CD4-positive, alpha-beta memory T cell (primary cell): ENCODE measurements at regions of chrX and their contacts with region 1.

Region 1: DNA sequence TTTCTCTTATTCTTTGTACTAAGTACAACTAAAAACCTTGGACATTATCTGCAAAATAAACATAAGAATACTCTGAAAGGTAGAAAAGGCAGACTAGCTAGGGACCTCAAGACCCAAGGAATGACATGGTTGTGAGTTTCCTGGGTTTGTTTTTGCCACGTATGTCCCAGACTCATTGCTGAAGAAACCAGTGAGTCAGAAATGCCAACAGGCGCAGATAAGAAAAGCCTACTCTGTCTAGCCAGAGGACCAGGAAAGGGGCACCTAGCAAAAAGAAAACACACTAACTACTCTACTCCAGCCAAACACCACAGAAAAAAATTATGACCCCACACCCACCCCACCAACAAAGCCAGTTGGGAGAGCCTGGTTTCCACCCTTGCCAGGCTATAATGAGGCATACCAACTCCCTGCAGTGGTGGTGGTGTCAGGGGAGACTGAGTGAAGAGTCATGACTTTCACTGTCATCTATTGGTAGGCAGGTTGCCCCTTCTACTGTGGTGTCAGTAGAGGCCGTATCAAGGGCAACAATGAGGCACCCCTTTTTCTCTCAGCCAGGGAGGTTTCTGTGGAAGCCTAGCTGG is 10.9 kb downstream of the MTMR1 start:
- DNase-seq: no peak
- H3K4me3 ChIP-seq: no peak overlapping the region
- H3K4me3 Mint-ChIP-seq: no peak overlapping the region
- H3K27ac ChIP-seq: no peak overlapping the region
- H3K27ac Mint-ChIP-seq: peak overlapping the region in 2 of 7 donors; percentile 18 to 39
- H3K4me1 ChIP-seq: peaks cover 17% of the 10 kb centered on the region
- H3K4me1 Mint-ChIP-seq: peaks cover 17 to 55% (median 29%) of the 10 kb centered on the region in 4 donors
- H3K27me3 ChIP-seq: no peaks in the 10 kb centered on the region
- H3K27me3 Mint-ChIP-seq: no peaks in the 10 kb centered on the region

Region 2: GRCh38 chrX:150683536-150684146 is 20.5 kb before region 1 on chrX:
- CTCF ChIA-PET with region 1: interaction called, 13 read pairs
- POLR2A ChIA-PET with region 1: interaction called, 3 read pairs
- intact Hi-C with region 1: no loop called
- DNase-seq: peak in 4 of 5 donors; percentile 59 to 67 (median 62)
- H3K4me3 ChIP-seq: no peak overlapping the region
- H3K4me3 Mint-ChIP-seq: no peak overlapping the region
- H3K27ac ChIP-seq: no peak overlapping the region
- H3K27ac Mint-ChIP-seq: peak overlapping the region in 3 of 7 donors; percentile 17 to 40 (median 17)
- H3K4me1 ChIP-seq: peaks cover 16% of the 10 kb centered on the region
- H3K4me1 Mint-ChIP-seq: peaks cover 10 to 12% (median 10%) of the 10 kb centered on the region in 4 donors
- H3K27me3 ChIP-seq: no peaks in the 10 kb centered on the region
- H3K27me3 Mint-ChIP-seq: no peaks in the 10 kb centered on the region